Dendritic cell treated with granulocyte-macrophage colony-stimulating factor and Interleukin-4, amounts not matched to agents 40 ng/mL and 50 ng/mL, for 4 days (primary cell): ENCODE measurements at regions of chr6 and their contacts with region 1.

Region 1: GRCh38 chr6:106085984-106086813 is at the start of gene PRDM1:
- H3K4me3 Mint-ChIP-seq: peak within 1 kb of the TSS; percentile 88
- H3K27ac Mint-ChIP-seq: peak within 1 kb of the TSS; percentile 99
- H3K4me1 Mint-ChIP-seq: peaks cover 78% of the 10 kb centered on the region
- H3K27me3 Mint-ChIP-seq: peaks cover 3% of the 10 kb centered on the region

Region 2: DNA sequence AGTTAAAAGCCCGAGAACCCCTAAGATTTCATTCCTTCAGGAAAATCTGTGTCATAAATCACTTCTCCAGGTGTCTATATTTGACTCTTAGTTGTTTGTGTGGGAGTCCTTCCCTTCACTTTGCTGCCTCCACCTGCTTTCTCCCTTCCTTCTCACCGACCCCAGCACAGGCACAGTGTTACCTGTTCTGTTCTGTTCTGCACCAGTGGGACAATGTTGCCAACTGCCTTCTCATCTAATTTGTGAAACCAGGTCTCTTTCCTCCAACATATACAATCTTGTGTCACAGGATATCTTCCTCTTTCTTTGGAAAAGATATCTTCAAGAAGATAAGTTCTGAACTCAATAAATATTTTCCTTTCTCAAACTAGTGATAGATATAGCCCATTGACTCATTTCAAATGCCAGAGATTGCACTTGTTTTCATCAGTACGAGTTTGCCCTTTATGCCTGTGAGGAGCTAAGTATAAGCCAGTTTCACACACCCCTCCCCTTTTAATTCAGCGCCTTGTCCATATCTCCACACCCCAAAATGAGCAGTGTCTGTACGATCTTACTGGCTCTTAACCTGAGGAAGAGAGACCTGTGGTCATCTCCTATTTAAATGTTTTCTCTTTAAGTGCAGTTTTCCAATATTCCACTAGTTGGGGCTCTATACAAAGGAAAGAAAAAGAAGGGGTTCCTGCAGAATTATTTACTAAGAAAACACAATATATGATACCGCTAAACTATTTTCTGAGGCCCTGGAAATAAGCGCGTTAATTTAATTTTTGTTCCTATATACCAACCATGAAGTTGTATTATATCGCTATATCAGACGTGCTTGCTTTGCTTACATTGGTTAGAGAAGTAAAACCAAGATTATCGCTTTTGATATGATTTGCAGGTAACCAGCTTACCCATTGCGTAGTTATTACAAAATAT is 601.7 kb before region 1 on chr6:
- intact Hi-C with region 1: loop called (anchors 10 kb)
- H3K4me3 Mint-ChIP-seq: no peak overlapping the region
- H3K27ac Mint-ChIP-seq: no peak overlapping the region
- H3K4me1 Mint-ChIP-seq: peaks cover 35% of the 10 kb centered on the region
- H3K27me3 Mint-ChIP-seq: no peaks in the 10 kb centered on the region

Region 3: GRCh38 chr6:105880030-105880492 is 206.1 kb before region 1 on chr6:
- intact Hi-C with region 1: loop called (anchors 5 kb)
- H3K4me3 Mint-ChIP-seq: peak overlapping the region; percentile 52
- H3K27ac Mint-ChIP-seq: peak overlapping the region; percentile 91
- H3K4me1 Mint-ChIP-seq: peaks cover 89% of the 10 kb centered on the region
- H3K27me3 Mint-ChIP-seq: peaks cover 3% of the 10 kb centered on the region

Region 4: GRCh38 chr6:106163446-106163965 is 77.3 kb after region 1 on chr6:
- intact Hi-C with region 1: loop called (anchors 5 kb)
- H3K4me3 Mint-ChIP-seq: peak overlapping the region; percentile 45
- H3K27ac Mint-ChIP-seq: peak overlapping the region; percentile 95
- H3K4me1 Mint-ChIP-seq: peaks cover 57% of the 10 kb centered on the region
- H3K27me3 Mint-ChIP-seq: no peaks in the 10 kb centered on the region

Region 5: GRCh38 chr6:106300944-106301343 is 214.7 kb after region 1 on chr6:
- intact Hi-C with region 1: loop called (anchors 5 kb)
- H3K4me3 Mint-ChIP-seq: no peak overlapping the region
- H3K27ac Mint-ChIP-seq: no peak overlapping the region
- H3K4me1 Mint-ChIP-seq: no peaks in the 10 kb centered on the region
- H3K27me3 Mint-ChIP-seq: no peaks in the 10 kb centered on the region

Region 6: DNA sequence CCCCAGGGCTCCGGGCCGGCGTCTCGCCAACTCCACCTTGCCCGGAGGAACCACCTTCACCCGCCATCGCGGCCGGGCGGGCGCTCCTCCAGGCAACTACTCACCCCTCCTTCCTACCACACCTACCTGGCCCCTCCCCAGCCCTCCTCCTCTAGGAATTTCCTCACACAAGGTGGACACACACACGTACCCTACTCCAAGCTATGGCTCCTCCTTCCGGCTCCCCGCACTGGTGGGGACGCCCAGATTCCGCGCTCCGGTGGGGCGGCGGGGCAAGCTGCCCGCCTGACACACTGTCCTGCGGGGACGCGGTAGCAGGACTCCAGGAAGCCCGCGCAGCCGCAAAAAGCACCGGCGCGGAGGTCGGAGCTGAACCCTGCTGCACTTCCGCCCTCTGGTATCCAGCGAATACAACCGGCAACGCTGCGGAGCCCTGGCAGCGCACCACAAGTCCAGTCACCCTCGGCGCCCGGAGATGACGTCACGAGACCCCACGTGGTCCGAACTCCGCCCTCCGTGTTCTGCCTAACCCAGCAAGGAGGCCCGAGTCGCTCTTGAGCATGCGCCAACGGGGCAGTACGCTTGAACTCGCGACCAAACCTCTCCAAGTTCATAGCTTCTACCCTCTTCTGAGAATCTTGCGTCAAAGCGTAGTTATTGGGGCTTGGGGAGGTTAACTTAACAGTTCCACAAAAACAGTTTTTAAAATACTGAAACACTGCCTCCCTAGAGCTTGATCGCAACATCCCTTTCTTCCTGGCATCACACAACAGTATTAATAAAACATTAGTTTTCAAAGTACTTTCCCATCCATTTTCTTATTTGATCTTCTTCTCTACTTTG is 239.4 kb after region 1 on chr6 and contains the start of gene ATG5:
- intact Hi-C with region 1: no loop called
- H3K4me3 Mint-ChIP-seq: peak within 1 kb of the TSS; percentile 97
- H3K27ac Mint-ChIP-seq: peak within 1 kb of the TSS; percentile 97
- H3K4me1 Mint-ChIP-seq: peaks cover 30% of the 10 kb centered on the region
- H3K27me3 Mint-ChIP-seq: peaks cover 18% of the 10 kb centered on the region